ENCODE measurements at regions of chr2 and their contacts with region 1.

Region 1: GRCh38 chr2:29249666-29250253 is 134.5 kb downstream of the CLIP4 start:
- DNase-seq: peak; percentile 49
- H3K4me3 ChIP-seq: no peak overlapping the region
- H3K27ac ChIP-seq: no peak overlapping the region
- H3K4me1 ChIP-seq: peaks cover 17% of the 10 kb centered on the region
- H3K27me3 ChIP-seq: no peaks in the 10 kb centered on the region
- CTCF ChIP-seq: no peak

Region 2: DNA sequence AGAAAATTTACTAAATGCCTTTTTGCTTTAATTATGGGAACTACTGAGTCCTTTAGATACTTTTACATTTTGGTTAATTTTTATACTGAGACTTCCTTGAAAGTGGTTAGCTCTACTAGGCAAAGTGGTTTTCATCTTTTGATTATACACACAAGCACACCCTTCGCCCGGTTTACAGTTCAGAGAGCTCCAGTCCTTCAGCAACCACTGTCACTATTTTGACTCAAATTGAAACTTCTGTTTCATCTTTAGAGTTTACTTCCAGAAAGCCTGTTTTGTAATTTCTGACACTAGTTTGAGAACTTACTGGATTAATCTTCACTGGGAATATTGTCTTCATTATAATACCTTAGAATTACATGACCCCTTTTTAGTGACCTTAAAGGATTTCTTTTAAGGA is 997.4 kb before region 1 on chr2:
- CTCF ChIA-PET with region 1: no interaction called
- POLR2A ChIA-PET with region 1: no interaction called
- intact Hi-C with region 1: loop called (anchors 5 kb)
- DNase-seq: no peak
- H3K4me3 ChIP-seq: no peak overlapping the region
- H3K27ac ChIP-seq: no peak overlapping the region
- H3K4me1 ChIP-seq: peaks cover 4% of the 10 kb centered on the region
- H3K27me3 ChIP-seq: no peaks in the 10 kb centered on the region
- CTCF ChIP-seq: no peak